ENCODE measurements at regions of chr7 and their contacts with region 1.

Region 1: GRCh38 chr7:135170274-135170997 is at the start of gene CYREN:
- DNase-seq: peak; percentile 91
- ATAC-seq: peak; percentile 83
- H3K4me3 Mint-ChIP-seq: peak within 1 kb of the TSS; percentile 92
- H3K27ac Mint-ChIP-seq: peak within 1 kb of the TSS; percentile 92
- H3K4me1 Mint-ChIP-seq: peaks cover 31% of the 10 kb centered on the region
- H3K27me3 Mint-ChIP-seq: no peaks in the 10 kb centered on the region
- total RNA-seq, gene CYREN: 39.6 to 40.8 TPM

Region 2: GRCh38 chr7:134966681-134967080 is 203.8 kb before region 1 on chr7:
- POLR2A ChIA-PET with region 1: no interaction called
- DNase-seq: no peak
- ATAC-seq: no peak
- H3K4me3 Mint-ChIP-seq: no peak overlapping the region
- H3K27ac Mint-ChIP-seq: no peak overlapping the region
- H3K4me1 Mint-ChIP-seq: no peaks in the 10 kb centered on the region
- H3K27me3 Mint-ChIP-seq: peaks cover 6% of the 10 kb centered on the region

Region 3: DNA sequence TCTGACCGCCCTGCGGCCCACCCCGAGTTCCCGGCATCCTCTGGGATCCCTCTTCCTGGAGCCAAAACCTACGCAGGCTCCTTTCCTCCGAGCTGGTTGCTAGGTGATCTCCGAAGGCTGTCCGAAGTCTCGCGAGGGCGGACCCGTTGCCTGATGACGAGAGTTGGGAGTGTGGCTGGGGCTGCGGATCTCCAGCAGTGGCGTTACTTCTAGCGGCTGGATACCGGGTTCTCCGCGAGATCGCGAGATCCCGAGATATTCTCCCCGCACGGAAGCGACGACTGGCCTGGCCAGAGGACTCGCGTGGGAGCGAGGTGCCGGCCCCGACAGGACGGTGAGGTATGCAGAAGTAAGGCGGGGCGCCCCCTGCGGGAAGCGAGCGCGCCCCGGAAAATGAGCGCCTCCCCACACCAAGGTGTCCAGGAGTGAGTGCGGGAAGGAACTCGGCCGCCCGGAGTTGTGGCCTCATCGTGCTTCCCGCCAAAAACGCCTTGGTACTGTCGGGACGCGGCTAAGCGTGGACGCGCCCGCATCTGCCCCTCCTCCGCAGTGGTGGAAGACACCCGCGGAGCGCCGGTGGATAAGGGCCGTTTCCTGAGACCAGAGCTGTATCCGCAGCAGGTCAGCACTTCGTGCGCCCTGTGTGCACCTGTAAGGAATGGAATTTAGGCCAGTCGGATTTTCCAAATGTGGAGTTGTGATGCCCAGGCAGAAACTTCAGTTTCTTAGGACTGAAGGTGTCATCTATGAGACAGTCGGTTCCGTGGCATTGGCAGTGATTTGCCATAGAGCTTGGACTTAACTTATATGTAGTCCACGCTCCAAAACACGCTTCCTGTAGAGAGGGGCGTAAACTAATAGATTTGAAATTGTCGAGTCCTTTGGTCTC is 183.8 kb before region 1 on chr7 and contains the start of gene AGBL3:
- POLR2A ChIA-PET with region 1: interaction called, 40 read pairs
- DNase-seq: peak; percentile 93
- ATAC-seq: peak; percentile 93
- H3K4me3 Mint-ChIP-seq: peak within 1 kb of the TSS; percentile 94
- H3K27ac Mint-ChIP-seq: peak within 1 kb of the TSS; percentile 85
- H3K4me1 Mint-ChIP-seq: peaks cover 31% of the 10 kb centered on the region
- H3K27me3 Mint-ChIP-seq: no peaks in the 10 kb centered on the region
- total RNA-seq, gene AGBL3: 4.5 to 6.7 TPM

Region 4: DNA sequence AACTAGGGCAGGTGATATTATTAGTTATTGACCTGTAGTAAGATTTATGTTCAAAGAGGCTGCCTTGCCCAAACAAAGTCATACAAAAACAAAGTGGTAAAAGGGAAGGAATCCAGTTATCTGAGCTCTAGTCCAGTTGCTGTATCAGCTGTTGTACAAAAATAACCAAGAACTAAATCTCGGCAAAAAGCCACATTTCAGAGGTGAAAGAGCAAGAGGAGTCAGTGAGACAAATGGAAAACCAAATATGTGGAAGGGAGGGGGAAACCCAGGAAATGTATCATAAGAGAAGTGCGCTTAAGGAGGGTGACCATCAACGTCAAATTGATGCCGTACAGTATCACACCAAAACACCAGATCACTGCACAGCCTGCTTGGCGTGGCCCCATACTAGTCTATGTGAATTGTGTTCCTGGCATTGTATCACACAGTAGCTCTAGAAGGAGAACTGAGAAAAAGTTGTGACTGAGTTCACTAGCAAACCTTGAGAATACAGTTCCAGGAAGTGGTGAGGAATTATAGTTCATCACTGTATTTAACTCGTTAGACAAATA is 177.7 kb before region 1 on chr7:
- POLR2A ChIA-PET with region 1: interaction called, 40 read pairs
- DNase-seq: peak; percentile 31
- ATAC-seq: peak; percentile 66
- H3K4me3 Mint-ChIP-seq: peak overlapping the region; percentile 74
- H3K27ac Mint-ChIP-seq: peak overlapping the region; percentile 91
- H3K4me1 Mint-ChIP-seq: peaks cover 54% of the 10 kb centered on the region
- H3K27me3 Mint-ChIP-seq: no peaks in the 10 kb centered on the region